ENCODE measurements at regions of chr3 and their contacts with region 1.

Region 1: GRCh38 chr3:77038468-77038929 is 1.4 kb upstream of the ROBO2 start:
- DNase-seq: peak; percentile 59 to 89
- H3K4me3 ChIP-seq: peak overlapping the region; percentile 23
- CTCF ChIP-seq: no peak
- POLR2A ChIP-seq: no peak

Region 2: DNA sequence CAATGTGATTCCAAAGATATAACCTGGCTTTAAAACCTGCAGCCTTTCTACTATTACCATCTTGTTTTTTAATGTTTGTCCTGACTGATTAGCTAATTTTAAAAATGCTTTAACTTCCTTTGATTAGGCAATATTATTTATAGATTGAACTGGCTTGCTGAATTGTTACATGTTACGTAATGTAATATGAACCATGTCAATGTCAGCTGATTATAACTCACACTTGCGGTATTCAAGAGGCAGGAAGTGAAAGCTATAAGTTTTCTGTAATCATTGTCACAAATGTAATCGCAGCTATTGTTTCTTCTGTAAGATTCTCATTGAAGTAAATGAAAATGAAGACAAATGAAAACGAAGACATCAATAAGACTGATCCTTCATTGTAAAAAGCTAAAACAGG is 148.2 kb after region 1 on chr3:
- intact Hi-C with region 1: no loop called
- DNase-seq: no peak
- H3K4me3 ChIP-seq: no peak overlapping the region
- CTCF ChIP-seq: no peak
- POLR2A ChIP-seq: no peak

Region 3: DNA sequence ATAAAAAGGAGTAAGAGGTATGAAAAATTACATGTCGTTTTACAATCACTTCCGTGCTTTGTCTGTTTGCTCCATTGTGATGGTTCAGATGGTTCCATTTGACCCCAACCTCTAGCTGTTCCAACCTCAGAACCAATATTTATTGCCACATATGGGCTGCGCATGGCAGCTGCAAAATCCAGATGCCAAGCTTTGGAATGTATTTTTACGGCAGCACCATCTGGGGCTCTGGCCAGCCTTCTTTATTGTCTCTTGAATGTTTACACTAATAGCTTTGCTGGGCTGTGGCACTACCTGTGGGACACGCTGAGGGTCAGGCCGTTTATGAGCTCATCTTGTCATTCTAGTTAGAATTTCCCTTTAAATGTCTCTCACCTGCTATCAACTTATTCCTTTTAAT is 221.2 kb after region 1 on chr3:
- intact Hi-C with region 1: loop called (anchors 10 kb)
- DNase-seq: no peak
- H3K4me3 ChIP-seq: no peak overlapping the region
- CTCF ChIP-seq: no peak
- POLR2A ChIP-seq: no peak

Region 4: GRCh38 chr3:78645628-78646310 is 1607.3 kb after region 1 on chr3:
- intact Hi-C with region 1: loop called (anchors 5 kb)
- DNase-seq: no peak
- H3K4me3 ChIP-seq: no peak overlapping the region
- CTCF ChIP-seq: peak in 1 of 3 donors; percentile 58
- POLR2A ChIP-seq: no peak